ENCODE measurements at regions of chr3 and their contacts with region 1.

Region 1: GRCh38 chr3:49723628-49724551 is at the start of gene GMPPB:
- DNase-seq: peak; percentile 93 to 98 (median 97)
- H3K4me3 ChIP-seq: peak within 1 kb of the TSS; percentile 70 to 100 (median 96)
- H3K27ac ChIP-seq: peak within 1 kb of the TSS in 56 of 59 donors; percentile 18 to 93 (median 84)
- H3K27me3 ChIP-seq: no peaks in the 10 kb centered on the region
- CTCF ChIP-seq: peak in 14 of 56 donors; percentile 13 to 40 (median 26)
- total RNA-seq, gene GMPPB: 10.6 to 25.4 (median 17.0) TPM

Region 2: DNA sequence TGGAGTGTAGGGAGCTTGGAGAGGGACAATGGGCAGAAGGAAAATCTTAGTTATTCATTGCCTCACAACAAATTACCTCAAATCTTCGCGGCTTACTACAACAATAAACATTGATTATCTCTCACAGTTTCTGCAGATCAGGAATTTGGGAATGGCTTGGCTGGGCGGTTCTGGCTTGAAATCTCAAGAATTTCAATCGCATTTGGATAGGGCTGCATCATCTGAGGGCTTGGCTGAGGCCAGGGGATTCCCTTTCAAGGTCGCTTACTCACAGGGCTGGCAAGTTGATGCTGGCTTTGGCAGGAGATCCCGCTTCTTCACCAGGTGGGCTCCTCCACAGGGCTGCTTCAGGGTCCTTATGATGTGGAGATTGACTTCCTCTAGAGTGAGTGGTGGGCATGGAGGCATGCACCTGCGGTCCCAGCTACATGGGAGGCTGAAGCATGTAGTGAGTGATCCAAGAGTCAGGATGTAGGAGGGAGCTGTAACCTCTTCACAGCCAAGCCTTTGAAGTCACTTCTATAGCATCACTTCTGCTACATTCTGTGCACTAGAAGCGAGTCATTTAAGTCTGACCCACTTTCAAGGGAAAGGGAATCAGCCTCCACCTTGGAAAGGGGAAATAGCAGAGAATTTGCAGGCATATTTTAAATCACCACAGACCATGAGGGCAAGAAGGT is 1598.7 kb before region 1 on chr3:
- intact Hi-C with region 1: no loop called
- DNase-seq: no peak
- H3K4me3 ChIP-seq: no peak overlapping the region
- H3K27ac ChIP-seq: no peak overlapping the region
- H3K27me3 ChIP-seq: no peaks in the 10 kb centered on the region
- CTCF ChIP-seq: no peak

Region 3: DNA sequence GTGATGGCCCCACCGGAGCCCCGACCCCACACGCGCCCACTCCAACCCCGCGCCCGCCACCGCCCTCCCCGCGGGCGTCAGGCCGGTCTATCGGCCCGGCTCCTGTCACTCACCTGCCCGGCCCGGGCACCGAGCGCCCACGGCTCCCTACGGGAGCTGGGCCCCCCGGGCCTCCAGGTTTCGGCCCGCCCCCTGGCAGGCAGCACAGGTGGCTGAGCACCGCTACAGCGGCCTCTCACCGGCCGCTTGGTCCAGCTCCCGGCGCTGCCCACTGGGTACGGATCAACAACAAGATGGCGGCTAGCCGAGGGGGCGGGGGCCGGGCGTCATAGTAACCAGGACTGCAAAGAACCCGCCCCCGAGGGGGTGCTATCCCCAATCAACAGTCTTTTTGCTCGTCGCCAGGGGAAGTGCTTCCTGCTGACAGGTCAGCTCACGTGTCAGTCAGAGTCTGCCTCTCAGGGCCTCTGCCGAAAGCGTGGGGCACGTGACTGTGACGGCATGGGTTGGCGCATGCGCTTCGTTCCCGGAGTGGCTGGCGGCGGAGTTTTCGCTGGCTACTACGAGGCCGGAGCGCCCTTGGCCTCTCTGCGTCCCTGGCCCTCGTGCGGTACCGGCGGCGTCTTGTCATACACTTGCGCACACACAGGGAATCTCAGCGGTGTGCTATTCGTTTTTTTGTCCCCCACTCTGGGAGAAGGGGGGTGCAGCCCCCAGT is 62.5 kb after region 1 on chr3 and contains the start of gene IP6K1:
- intact Hi-C with region 1: loop called (anchors 2 to 5 kb)
- DNase-seq: peak; percentile 100
- H3K4me3 ChIP-seq: peak within 1 kb of the TSS; percentile 69 to 100 (median 96)
- H3K27ac ChIP-seq: peak within 1 kb of the TSS; percentile 61 to 99 (median 95)
- H3K27me3 ChIP-seq: no peaks in the 10 kb centered on the region
- CTCF ChIP-seq: peak in 25 of 56 donors; percentile 8 to 56 (median 23)
- total RNA-seq, gene IP6K1: 82.9 to 160 (median 118) TPM

Region 4: GRCh38 chr3:49839193-49839809 is 115.4 kb after region 1 on chr3:
- intact Hi-C with region 1: loop called in 1 of 2 experiments (anchors 5 kb)
- DNase-seq: peak; percentile 68 to 86 (median 81)
- H3K4me3 ChIP-seq: peak overlapping the region in 5 of 59 donors; percentile 9 to 22 (median 17)
- H3K27ac ChIP-seq: peak overlapping the region in 19 of 59 donors; percentile 8 to 81 (median 51)
- H3K27me3 ChIP-seq: no peaks in the 10 kb centered on the region
- CTCF ChIP-seq: peak; percentile 71 to 97 (median 89)

Measured in dorsolateral prefrontal cortex (tissue), 120 donors.